Activated B cell treated with CpG ODN at 0.5 μM for 24 hours (primary cell): ENCODE measurements at regions of chr16 and their contacts with region 1.

Region 1: DNA sequence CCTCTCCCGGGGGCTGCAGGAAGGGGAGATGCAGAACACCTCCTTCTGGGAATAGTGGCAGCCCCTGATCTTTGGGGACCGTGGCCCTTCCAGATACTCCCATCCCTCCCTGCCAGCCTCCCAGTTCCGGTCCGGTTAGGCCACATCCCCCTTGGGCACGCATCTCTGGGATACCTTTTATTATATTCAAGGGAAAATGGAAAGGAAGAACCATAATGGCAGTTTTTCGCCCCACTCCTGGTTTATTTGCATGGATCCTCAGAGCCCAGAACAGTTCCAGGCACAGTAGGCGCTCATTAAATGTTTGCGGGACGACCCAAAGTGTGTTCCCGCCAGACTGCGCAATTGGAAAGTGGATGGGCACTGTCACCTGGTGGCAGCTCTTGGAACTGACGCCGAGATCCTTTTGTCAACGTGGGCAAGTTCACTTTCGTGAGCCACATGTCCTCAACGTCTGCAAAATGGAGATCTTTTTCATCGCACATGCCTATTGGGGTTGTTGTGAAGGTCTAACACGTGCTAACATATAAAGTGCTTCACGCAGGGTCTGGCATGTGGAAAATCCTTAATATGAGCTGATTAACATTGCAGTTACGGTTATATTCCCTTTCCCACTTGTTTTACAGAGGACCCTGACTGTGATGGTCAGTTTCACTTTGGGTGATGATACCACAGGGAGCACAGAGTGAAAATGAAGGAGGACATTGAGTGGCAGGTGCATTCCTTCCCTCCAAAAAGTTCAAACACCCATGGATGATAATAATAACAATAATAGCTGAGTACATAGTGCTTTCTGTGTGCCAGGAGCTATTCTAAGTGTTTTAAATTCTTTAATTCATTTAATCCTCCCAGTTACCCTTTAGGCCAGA is 1.7 kb upstream of the GPRC5B start:
- DNase-seq: peak; percentile 58
- ATAC-seq: peak; percentile 74
- H3K4me3 Mint-ChIP-seq: peak overlapping the region; percentile 82
- H3K27ac Mint-ChIP-seq: no peak overlapping the region
- H3K4me1 Mint-ChIP-seq: peaks cover 31% of the 10 kb centered on the region
- H3K27me3 Mint-ChIP-seq: peaks cover 35% of the 10 kb centered on the region
- CTCF ChIP-seq: peak; percentile 72

Region 2: GRCh38 chr16:19348578-19349315 is 537.6 kb before region 1 on chr16:
- CTCF ChIA-PET with region 1: no interaction called
- POLR2A ChIA-PET with region 1: no interaction called
- intact Hi-C with region 1: no loop called
- DNase-seq: no peak
- ATAC-seq: no peak
- H3K4me3 Mint-ChIP-seq: no peak overlapping the region
- H3K27ac Mint-ChIP-seq: no peak overlapping the region
- H3K4me1 Mint-ChIP-seq: no peaks in the 10 kb centered on the region
- H3K27me3 Mint-ChIP-seq: peaks cover 17% of the 10 kb centered on the region
- CTCF ChIP-seq: no peak

Region 3: GRCh38 chr16:19389246-19389645 is 497.1 kb before region 1 on chr16:
- CTCF ChIA-PET with region 1: no interaction called
- POLR2A ChIA-PET with region 1: no interaction called
- intact Hi-C with region 1: loop called (anchors 5 kb)
- DNase-seq: peak; percentile 22
- ATAC-seq: peak; percentile 61
- H3K4me3 Mint-ChIP-seq: no peak overlapping the region
- H3K27ac Mint-ChIP-seq: no peak overlapping the region
- H3K4me1 Mint-ChIP-seq: no peaks in the 10 kb centered on the region
- H3K27me3 Mint-ChIP-seq: peaks cover 29% of the 10 kb centered on the region
- CTCF ChIP-seq: no peak

Region 4: DNA sequence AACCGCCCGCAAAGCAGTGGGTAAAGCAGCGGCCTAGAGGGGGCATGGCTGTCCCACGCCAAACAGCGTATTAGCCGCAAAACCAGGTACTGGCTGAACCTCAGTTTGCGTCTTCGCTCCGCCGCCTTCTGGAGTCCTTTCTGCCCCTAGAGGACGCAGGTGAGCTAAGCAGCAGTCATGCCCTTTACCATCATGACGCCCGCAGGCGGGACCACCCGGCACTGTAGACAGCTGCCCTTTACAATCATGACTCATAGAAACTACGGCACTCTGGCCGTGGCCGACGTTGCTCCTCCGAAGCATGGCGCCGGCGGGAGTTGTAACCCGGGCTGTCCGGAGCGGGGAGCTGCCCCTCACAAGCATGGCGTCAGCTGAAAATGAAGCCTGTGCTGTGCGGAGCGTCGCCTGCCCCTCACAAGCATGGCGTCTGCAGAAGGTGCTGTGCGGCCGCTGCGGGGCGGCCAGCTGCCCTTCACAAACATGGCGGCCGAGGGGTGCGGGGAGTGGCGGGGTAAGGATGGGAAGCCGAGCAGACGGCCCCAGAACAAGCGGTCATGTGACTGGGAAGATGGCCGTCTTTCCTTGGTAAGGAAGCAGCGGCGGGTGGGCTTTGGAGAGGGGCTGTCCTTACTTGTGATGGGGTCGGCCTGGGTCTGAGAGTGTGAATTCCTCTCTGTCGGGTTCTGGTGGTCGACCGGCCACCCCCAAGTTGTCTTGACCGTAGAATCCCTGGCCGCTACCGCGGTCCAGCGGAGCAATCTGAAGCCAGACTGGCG is 331.0 kb before region 1 on chr16 and contains the start of gene VPS35L:
- CTCF ChIA-PET with region 1: interaction called, 47 read pairs
- POLR2A ChIA-PET with region 1: interaction called, 4 read pairs
- intact Hi-C with region 1: loop called (anchors 1 kb)
- DNase-seq: peak; percentile 95
- ATAC-seq: peak; percentile 94
- H3K4me3 Mint-ChIP-seq: peak within 1 kb of the TSS; percentile 95
- H3K27ac Mint-ChIP-seq: peak within 1 kb of the TSS; percentile 91
- H3K4me1 Mint-ChIP-seq: peaks cover 26% of the 10 kb centered on the region
- H3K27me3 Mint-ChIP-seq: no peaks in the 10 kb centered on the region
- CTCF ChIP-seq: no peak
- total RNA-seq, gene VPS35L: 59.7 and 66.0 TPM in 2 replicates

Region 5: DNA sequence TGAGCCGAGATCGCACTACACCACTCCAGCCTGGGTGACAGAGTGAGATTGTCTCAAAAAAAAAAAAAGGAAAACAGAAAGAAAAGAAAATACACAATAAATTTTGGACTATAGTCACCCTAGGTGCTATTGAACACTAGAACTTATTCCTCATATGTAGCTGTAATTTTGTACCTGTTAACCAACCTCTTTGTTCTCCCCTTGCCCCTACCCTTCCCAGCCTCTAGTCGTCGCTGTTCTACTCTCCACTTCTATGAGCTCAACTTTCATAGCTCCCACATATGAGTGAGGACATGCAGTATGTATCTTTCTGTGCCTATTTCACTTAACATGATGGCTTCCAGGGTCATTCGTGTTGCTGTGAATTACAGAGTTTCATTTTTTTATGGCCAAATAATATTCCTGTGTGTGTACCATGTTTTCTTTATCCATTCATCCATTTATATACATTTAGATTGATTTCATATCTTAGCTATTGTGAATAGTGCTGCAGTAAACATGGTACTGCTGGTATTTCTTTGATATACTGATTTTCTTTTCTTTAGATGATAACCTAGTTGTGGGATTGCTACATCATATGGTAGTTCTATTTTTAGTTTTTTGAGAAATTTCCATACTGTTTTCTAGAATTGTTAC is 302.5 kb before region 1 on chr16:
- CTCF ChIA-PET with region 1: no interaction called
- POLR2A ChIA-PET with region 1: no interaction called
- intact Hi-C with region 1: loop called (anchors 1 kb)
- DNase-seq: no peak
- ATAC-seq: no peak
- H3K4me3 Mint-ChIP-seq: no peak overlapping the region
- H3K27ac Mint-ChIP-seq: no peak overlapping the region
- H3K4me1 Mint-ChIP-seq: peaks cover 9% of the 10 kb centered on the region
- H3K27me3 Mint-ChIP-seq: no peaks in the 10 kb centered on the region
- CTCF ChIP-seq: no peak

Region 6: DNA sequence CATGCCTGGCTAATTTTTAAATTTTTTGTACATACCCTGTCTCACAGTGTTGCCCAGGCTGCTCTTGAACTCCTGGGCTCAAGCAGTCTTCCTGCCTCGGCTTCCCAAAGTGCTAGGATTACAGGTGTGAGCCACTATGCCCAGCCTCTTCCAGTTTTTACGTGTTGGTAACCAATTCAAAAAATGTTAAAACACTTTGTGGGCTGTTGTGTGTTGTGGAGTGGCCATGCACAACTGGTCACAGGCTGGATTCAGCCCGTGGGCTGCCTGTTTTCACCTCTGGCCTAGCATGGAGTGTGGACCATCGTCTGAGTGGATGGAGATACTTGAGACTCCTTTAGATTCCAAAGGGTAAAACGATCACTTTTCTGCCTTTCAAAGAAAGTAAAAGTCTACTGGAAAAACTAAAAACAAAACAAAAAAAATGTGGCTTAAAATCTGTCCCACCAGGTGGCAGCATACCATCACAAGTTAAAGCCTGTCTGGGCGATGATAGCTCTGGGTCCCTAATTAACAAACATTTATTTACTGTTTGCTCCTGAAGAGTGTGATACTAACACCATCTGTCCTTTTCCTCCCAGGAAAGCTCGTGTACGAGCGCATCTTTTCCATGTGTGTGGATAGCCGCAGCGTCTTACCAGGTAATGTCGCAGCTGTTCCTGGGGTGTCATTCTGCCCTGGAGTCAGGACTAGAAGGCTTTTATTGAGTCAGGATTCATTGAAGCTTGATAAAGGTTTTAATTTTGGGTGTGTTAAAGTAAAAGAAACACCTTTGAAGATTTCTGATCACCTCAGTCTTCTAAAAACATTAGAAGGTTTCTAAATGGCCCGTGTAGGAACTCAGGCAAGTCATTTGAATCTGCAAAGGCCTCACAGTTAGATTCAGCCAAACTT is 285.0 kb before region 1 on chr16:
- CTCF ChIA-PET with region 1: interaction called, 22 read pairs
- POLR2A ChIA-PET with region 1: no interaction called
- intact Hi-C with region 1: no loop called
- DNase-seq: no peak
- ATAC-seq: no peak
- H3K4me3 Mint-ChIP-seq: no peak overlapping the region
- H3K27ac Mint-ChIP-seq: no peak overlapping the region
- H3K4me1 Mint-ChIP-seq: no peaks in the 10 kb centered on the region
- H3K27me3 Mint-ChIP-seq: no peaks in the 10 kb centered on the region
- CTCF ChIP-seq: no peak

Region 7: DNA sequence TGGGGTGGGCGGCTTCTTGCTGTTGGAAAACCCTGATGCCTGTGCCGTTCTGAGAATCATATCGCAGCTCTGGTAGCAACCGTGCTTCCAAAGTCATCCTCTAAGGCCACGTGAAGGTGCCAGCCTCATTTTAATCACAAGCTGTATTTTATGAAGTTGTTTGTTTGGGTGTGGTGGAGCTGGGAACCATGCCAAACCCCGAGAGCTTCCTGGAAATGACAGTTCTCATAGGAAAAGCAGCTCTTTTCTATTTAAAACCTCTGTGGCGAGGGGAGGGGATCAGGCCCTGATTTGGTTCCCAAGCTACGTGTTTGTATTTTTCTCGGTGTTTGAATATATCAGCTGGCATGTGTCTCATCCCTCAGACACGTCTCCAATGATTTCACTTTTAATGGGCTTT is 190.0 kb before region 1 on chr16:
- CTCF ChIA-PET with region 1: no interaction called
- POLR2A ChIA-PET with region 1: no interaction called
- intact Hi-C with region 1: no loop called
- DNase-seq: no peak
- ATAC-seq: no peak
- H3K4me3 Mint-ChIP-seq: no peak overlapping the region
- H3K27ac Mint-ChIP-seq: no peak overlapping the region
- H3K4me1 Mint-ChIP-seq: no peaks in the 10 kb centered on the region
- H3K27me3 Mint-ChIP-seq: no peaks in the 10 kb centered on the region
- CTCF ChIP-seq: no peak

Region 8: GRCh38 chr16:19717771-19718602 is 168.3 kb before region 1 on chr16 and contains the starts of genes IQCK and KNOP1:
- CTCF ChIA-PET with region 1: no interaction called
- POLR2A ChIA-PET with region 1: interaction called, 7 read pairs
- intact Hi-C with region 1: loop called (anchors 2 kb)
- DNase-seq: peak; percentile 85
- ATAC-seq: peak; percentile 92
- H3K4me3 Mint-ChIP-seq: peak within 1 kb of the TSS; percentile 94
- H3K27ac Mint-ChIP-seq: peak within 1 kb of the TSS; percentile 65
- H3K4me1 Mint-ChIP-seq: peaks cover 24% of the 10 kb centered on the region
- H3K27me3 Mint-ChIP-seq: no peaks in the 10 kb centered on the region
- CTCF ChIP-seq: no peak
- total RNA-seq, gene IQCK: 3.2 and 3.8 TPM in 2 replicates
- total RNA-seq, gene KNOP1: 19.0 and 20.5 TPM in 2 replicates

Region 9: DNA sequence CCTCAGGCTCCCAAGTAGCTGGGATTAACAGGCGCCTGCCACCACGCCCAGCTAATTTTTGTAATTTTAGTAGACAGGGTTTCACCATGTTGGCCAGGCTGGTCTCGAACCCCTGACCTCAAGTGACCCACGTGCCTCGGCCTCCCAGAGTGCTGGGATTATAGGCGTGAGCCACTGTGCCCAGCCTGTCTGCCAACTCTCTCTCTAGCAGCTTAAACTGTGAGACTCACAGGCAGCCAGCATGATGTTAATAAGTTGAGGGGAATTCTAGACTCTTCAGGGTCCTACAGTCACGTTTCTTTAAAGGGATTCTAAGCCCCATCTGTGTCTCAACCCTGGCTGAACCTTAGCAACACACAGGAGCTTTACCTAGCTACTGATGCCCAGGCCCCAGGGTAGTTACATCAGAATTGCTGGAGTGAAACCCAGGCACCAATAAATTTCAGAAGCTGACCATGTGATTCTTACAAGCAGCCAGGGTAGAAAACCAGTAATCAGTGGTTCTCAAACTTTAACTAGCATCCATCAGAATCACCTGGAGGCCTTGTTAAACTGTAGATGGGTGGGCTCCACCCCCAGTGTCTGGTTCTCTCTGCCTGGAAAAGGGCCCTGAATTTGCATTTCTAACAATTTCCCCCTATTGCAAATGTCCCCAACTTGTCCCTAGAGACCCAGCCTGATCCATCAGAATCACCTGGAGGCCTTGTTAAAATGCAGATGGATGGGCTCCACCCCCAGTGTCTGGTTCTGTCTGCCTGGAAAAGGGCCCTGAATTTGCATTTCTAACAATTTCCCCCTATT is 32.4 kb before region 1 on chr16:
- CTCF ChIA-PET with region 1: no interaction called
- POLR2A ChIA-PET with region 1: no interaction called
- intact Hi-C with region 1: no loop called
- DNase-seq: no peak
- ATAC-seq: no peak
- H3K4me3 Mint-ChIP-seq: no peak overlapping the region
- H3K27ac Mint-ChIP-seq: no peak overlapping the region
- H3K4me1 Mint-ChIP-seq: no peaks in the 10 kb centered on the region
- H3K27me3 Mint-ChIP-seq: peaks cover 4% of the 10 kb centered on the region
- CTCF ChIP-seq: no peak